ENCODE measurements at regions of chr17 and their contacts with region 1.

Region 1: GRCh38 chr17:8991514-8992285 is 26.2 kb upstream of the PIK3R5 start:
- DNase-seq: no peak
- H3K4me3 ChIP-seq: no peak overlapping the region
- H3K27me3 ChIP-seq: no peaks in the 10 kb centered on the region; the same call in 1 of the 2 replicates
- CTCF ChIP-seq: peak; percentile 81

Region 2: DNA sequence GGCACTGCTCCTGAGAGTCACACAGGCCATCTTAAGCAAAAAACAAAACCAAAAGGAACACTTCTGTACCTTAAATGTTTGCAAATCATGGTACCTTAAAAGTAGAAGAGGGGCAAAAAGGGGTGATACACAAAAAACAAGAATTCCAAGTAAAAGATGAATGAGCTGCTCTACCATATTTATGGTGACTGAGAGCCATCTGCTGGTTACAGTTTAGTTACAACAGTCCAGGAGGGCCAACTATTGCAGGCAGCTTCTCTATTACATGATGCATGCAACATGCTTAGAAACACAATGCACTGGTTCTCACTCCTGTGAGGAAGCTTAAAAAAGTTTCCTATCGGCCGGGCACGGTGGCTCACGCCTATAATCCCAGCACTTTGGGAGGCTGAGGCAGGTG is 530.4 kb after region 1 on chr17:
- CTCF ChIA-PET with region 1: interaction called, 80 read pairs
- POLR2A ChIA-PET with region 1: no interaction called
- DNase-seq: no peak
- H3K4me3 ChIP-seq: no peak overlapping the region
- H3K27me3 ChIP-seq: no peaks in the 10 kb centered on the region
- CTCF ChIP-seq: peak; percentile 51

Region 3: DNA sequence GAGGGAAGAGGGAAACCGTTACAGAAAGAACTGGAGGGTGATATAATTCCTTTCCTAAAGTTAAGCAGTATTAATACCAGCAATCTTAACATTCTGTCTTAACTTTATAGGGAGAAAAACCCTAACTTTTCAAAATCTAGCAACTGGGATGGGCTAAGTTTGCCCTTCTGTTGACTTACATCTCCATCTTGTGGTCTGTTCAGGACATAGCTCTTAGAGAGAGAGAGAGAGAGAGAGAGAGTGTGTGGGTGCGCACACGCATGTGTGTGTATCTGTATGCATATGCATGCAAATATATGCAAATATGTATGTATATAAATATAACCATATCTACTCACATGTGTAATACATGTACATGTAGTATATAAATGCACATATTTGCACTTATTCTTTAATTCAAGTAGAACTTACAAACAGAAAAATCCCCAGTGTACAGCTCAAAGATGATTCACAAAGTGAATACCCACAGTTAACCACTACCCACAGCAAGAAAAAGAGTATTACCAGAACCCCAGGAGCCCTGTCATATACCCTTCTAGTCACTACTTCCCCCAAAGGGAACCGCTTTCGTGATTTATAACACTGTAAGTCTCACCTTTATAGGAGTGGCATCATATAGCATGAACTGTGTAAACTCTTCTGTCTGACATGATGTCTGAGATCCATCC is 537.5 kb after region 1 on chr17:
- CTCF ChIA-PET with region 1: interaction called, 80 read pairs
- POLR2A ChIA-PET with region 1: no interaction called
- DNase-seq: no peak
- H3K4me3 ChIP-seq: no peak overlapping the region
- H3K27me3 ChIP-seq: no peaks in the 10 kb centered on the region
- CTCF ChIP-seq: peak; percentile 62

Measured in BJ (cell line).